WTC11 (cell line): ENCODE measurements at regions of chr15 and their contacts with region 1.

Region 1: GRCh38 chr15:89177633-89178306 is 43.6 kb downstream of the RLBP1 start:
- DNase-seq: peak; percentile 60
- ATAC-seq: peak; percentile 62
- H3K4me3 Mint-ChIP-seq: no peak overlapping the region
- H3K27ac Mint-ChIP-seq: peak overlapping the region; percentile 35
- H3K4me1 Mint-ChIP-seq: peaks cover 3% of the 10 kb centered on the region; the same call in 1 of the 2 replicates
- H3K27me3 Mint-ChIP-seq: no peaks in the 10 kb centered on the region
- CTCF ChIP-seq: peak; percentile 58

Region 2: GRCh38 chr15:88891546-88892254 is 286.1 kb before region 1 on chr15:
- CTCF ChIA-PET with region 1: interaction called, 20 read pairs
- POLR2A ChIA-PET with region 1: no interaction called
- DNase-seq: no peak
- ATAC-seq: no peak
- H3K4me3 Mint-ChIP-seq: no peak overlapping the region
- H3K27ac Mint-ChIP-seq: no peak overlapping the region
- H3K4me1 Mint-ChIP-seq: peaks cover 13% of the 10 kb centered on the region
- H3K27me3 Mint-ChIP-seq: 0 out of 2 replicates have a peak, but pooled peaks cover 2% of the 10 kb centered on the region
- CTCF ChIP-seq: no peak

Region 3: GRCh38 chr15:88904624-88905327 is 273.0 kb before region 1 on chr15:
- CTCF ChIA-PET with region 1: interaction called, 18 read pairs
- POLR2A ChIA-PET with region 1: no interaction called
- DNase-seq: peak; percentile 94
- ATAC-seq: peak; percentile 91
- H3K4me3 Mint-ChIP-seq: no peak overlapping the region
- H3K27ac Mint-ChIP-seq: peak overlapping the region; percentile 39; the same call in 1 of the 2 replicates
- H3K4me1 Mint-ChIP-seq: peaks cover 64% of the 10 kb centered on the region
- H3K27me3 Mint-ChIP-seq: no peaks in the 10 kb centered on the region; the same call in 1 of the 2 replicates
- CTCF ChIP-seq: peak; percentile 99

Region 4: GRCh38 chr15:89087830-89088604 is 89.8 kb before region 1 on chr15 and contains the start of gene ABHD2:
- CTCF ChIA-PET with region 1: interaction called, 19 read pairs
- POLR2A ChIA-PET with region 1: no interaction called
- DNase-seq: peak; percentile 99
- ATAC-seq: peak; percentile 99
- H3K4me3 Mint-ChIP-seq: no peak within 1 kb of the TSS
- H3K27ac Mint-ChIP-seq: no peak within 1 kb of the TSS
- H3K4me1 Mint-ChIP-seq: peaks cover 36% of the 10 kb centered on the region
- H3K27me3 Mint-ChIP-seq: no peaks in the 10 kb centered on the region
- CTCF ChIP-seq: no peak
- total RNA-seq, gene ABHD2: 26.2 to 29.7 TPM (median 29.5 TPM) in 3 replicates

Region 5: DNA sequence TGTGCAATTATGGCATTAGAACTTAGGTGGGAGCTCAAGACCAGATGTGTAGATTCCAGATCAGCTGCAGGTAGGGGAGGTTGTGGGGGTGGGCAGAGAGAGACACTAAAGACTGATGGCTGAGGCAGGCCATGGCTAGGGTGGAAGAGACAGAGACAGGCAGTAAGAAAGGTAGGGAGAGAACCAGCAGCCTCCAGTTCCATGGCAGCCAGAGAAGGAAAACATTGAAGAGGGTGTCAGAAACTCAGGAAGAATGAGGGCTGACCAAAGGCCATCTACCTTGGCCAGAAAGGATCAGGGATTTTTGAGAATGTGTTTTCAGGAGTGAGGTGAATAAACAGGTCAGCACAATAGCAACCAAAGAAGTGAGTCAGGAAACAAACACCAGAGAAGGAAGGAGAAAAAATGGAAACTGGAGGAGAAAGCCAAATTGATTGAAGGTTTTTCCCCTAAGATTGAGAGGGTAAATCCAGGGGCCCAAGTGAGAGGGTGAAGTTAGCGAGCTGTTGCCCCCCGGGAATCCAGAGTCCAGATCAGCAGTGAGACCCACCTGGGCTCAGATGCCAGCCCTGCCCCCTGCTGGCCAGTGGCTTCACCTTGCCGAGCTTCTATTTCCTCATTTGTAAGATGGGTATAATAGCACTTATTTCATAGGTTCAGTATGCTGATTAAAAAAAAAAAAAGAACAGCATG is 48.5 kb before region 1 on chr15:
- CTCF ChIA-PET with region 1: interaction called, 26 read pairs
- POLR2A ChIA-PET with region 1: no interaction called
- DNase-seq: peak; percentile 81
- ATAC-seq: peak; percentile 87
- H3K4me3 Mint-ChIP-seq: no peak overlapping the region
- H3K27ac Mint-ChIP-seq: no peak overlapping the region
- H3K4me1 Mint-ChIP-seq: no peaks in the 10 kb centered on the region
- H3K27me3 Mint-ChIP-seq: no peaks in the 10 kb centered on the region
- CTCF ChIP-seq: peak; percentile 68

Region 6: DNA sequence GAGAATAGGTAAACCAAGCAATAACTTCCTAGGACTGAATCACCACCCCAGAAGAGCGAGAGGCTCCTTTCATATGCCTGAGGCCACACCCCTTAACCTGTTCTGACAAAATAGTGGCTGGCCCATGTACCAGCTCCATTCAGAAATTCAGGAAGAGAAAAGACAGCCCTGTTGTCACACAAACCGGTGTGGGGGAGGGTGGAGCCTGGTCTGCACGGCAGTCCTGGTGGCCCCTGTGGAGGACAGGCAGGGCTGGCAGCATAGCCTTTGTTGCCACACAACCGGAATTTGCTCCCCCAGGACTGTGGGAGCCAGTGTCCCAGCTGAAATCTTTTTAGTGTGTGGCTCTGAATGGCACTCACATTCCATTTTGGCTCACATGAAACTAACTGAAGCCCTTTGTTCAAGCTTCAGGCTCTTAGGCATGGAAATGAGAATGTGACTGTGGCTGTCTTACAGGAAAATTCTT is 19.8 kb after region 1 on chr15:
- CTCF ChIA-PET with region 1: interaction called, 35 read pairs
- POLR2A ChIA-PET with region 1: no interaction called
- DNase-seq: peak; percentile 72
- ATAC-seq: peak; percentile 84
- H3K4me3 Mint-ChIP-seq: peak overlapping the region; percentile 5; the same call in 1 of the 2 replicates
- H3K27ac Mint-ChIP-seq: peak overlapping the region; percentile 85
- H3K4me1 Mint-ChIP-seq: peaks cover 63% of the 10 kb centered on the region
- H3K27me3 Mint-ChIP-seq: no peaks in the 10 kb centered on the region
- CTCF ChIP-seq: no peak

Region 7: DNA sequence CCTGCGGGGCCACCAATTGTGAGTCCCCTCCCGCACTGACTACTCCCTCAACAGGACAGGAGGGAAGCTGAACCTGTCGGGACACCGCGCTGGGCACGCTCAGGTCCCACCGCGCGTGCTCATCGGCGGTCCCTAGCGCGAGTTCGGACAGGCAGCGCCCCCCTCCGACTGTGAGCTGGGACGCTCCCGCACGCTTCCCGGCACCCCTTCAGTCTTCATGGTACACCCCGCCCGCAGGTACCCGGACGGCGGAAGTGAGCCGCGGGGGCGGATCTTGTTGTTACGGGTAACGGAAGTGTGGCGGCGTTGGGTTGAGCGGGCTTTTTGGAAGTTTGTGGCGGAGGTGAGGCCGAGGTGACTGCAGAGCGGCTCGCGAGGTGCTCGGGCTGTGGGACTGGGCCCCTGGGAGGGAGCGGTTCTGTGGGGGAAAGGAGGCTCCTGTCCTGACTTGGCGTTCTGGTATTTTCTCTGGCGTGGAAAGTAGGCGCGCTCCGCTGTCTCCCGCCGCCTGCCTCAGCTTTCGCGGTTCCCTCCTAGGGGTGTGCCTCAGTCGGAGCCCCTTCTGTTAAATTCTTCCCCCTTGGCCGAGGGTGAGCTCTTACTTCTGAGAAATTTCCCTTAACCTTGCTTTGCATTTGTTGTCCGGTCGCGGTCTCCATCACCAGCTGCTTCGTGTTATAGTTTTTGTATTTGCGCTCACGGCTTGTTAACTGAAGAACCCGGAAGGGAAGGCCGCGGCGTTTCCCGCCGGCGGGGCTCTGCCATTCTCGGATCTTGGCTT is 66.1 kb after region 1 on chr15 and contains the start of gene FANCI:
- CTCF ChIA-PET with region 1: interaction called, 10 read pairs
- POLR2A ChIA-PET with region 1: no interaction called
- DNase-seq: peak; percentile 98
- ATAC-seq: peak; percentile 96
- H3K4me3 Mint-ChIP-seq: peak within 1 kb of the TSS; percentile 97
- H3K27ac Mint-ChIP-seq: peak within 1 kb of the TSS; percentile 88
- H3K4me1 Mint-ChIP-seq: peaks cover 25% of the 10 kb centered on the region
- H3K27me3 Mint-ChIP-seq: peaks cover 23% of the 10 kb centered on the region
- CTCF ChIP-seq: 0 out of 2 replicates have a peak, but pooled peaks have one; percentile 25
- total RNA-seq, gene FANCI: 94.5 to 108 TPM (median 101 TPM) in 3 replicates